Panc1 (cell line): ENCODE measurements at regions of chr12 and their contacts with region 1.

Region 1: GRCh38 chr12:94663702-94664101 is 13.3 kb upstream of the TMCC3 start:
- DNase-seq: no peak
- ATAC-seq: no peak
- H3K4me3 ChIP-seq: no peak overlapping the region
- H3K27ac ChIP-seq: no peak overlapping the region
- H3K4me1 ChIP-seq: no peaks in the 10 kb centered on the region
- H3K27me3 ChIP-seq: peaks cover 11% of the 10 kb centered on the region
- CTCF ChIP-seq: no peak

Region 2: GRCh38 chr12:93778306-93778705 is 885.4 kb before region 1 on chr12:
- CTCF ChIA-PET with region 1: no interaction called
- POLR2A ChIA-PET with region 1: interaction called, 14 read pairs
- in situ Hi-C with region 1: no loop called
- intact Hi-C with region 1: no loop called
- DNase-seq: no peak
- ATAC-seq: no peak
- H3K4me3 ChIP-seq: no peak overlapping the region
- H3K27ac ChIP-seq: no peak overlapping the region; the same call in 1 of the 2 replicates
- H3K4me1 ChIP-seq: no peaks in the 10 kb centered on the region; the same call in none of the 2 replicates
- H3K27me3 ChIP-seq: no peaks in the 10 kb centered on the region
- CTCF ChIP-seq: no peak

Region 3: DNA sequence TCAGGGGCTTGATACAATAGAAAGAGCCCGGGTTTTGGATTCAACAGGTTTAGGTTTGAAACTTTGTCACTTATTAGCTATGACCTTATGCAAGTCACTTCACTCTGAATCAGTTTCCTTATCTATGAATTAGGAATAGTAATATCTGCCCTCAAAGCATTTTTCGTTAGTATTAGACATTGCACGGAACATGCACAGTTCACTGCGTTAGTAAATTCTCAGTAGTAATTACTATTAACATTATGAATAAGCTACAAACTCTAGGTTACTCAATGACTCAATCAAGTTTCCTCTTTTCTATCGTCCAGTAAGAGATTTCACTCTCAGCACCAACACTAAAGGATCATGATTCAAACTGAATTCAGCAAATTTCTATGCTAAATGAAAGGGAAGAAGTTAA is 354.3 kb before region 1 on chr12:
- CTCF ChIA-PET with region 1: no interaction called
- POLR2A ChIA-PET with region 1: no interaction called
- in situ Hi-C with region 1: no loop called
- intact Hi-C with region 1: no loop called
- DNase-seq: no peak
- ATAC-seq: no peak
- H3K4me3 ChIP-seq: no peak overlapping the region
- H3K27ac ChIP-seq: no peak overlapping the region
- H3K4me1 ChIP-seq: no peaks in the 10 kb centered on the region
- H3K27me3 ChIP-seq: no peaks in the 10 kb centered on the region
- CTCF ChIP-seq: no peak

Region 4: DNA sequence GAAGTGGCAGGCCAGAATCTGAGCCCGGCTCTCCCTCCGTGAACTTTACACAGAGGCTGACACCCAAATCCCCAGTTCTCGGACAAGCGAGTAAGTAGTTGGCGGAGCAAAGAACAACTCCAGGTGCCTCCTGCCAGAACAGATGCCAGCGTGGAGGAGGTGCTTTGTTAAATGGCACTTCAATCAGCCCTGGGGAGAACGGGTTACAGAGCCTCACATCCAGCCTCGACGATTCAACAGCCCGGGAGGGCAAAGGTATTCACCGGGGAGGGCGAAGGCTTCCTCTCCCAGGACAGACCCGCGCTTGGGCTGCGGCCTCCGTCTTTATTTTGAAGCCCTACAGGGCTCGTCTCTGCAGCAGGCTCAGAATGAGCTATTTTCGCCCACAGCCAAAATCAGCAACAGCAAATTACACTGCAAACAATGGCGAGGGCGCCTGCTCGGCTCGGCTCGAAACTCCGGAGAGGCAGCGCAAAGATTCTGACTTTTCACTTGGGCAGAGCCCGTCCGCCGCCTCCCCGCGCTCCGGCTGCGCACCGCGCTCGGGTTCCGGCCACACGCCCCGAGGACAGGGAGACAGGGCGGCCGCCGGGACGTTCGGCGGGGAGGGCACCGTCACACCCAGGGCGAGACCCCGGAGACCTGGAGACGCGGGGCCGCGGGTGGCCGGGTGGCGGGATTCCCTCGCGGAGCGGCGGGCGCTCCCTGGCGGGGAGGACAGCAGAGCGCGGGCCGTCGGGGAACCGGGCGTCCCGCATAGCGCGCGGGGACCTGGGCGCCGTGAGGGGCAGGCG is 14.2 kb before region 1 on chr12:
- CTCF ChIA-PET with region 1: no interaction called
- POLR2A ChIA-PET with region 1: interaction called, 13 read pairs
- in situ Hi-C with region 1: no loop called
- intact Hi-C with region 1: no loop called
- DNase-seq: no peak
- ATAC-seq: peak; percentile 83
- H3K4me3 ChIP-seq: peak overlapping the region; percentile 42 to 53
- H3K27ac ChIP-seq: no peak overlapping the region
- H3K4me1 ChIP-seq: peaks cover 3% of the 10 kb centered on the region; the same call in 1 of the 2 replicates
- H3K27me3 ChIP-seq: peaks cover 29% of the 10 kb centered on the region
- CTCF ChIP-seq: peak; percentile 74